ENCODE measurements at regions of chr1 and their contacts with region 1.

Region 1: GRCh38 chr1:28877132-28877781 is 37.1 kb upstream of the EPB41 start:
- DNase-seq: peak; percentile 88
- H3K4me3 Mint-ChIP-seq: no peak overlapping the region
- H3K27ac Mint-ChIP-seq: no peak overlapping the region
- H3K4me1 Mint-ChIP-seq: peaks cover 9% of the 10 kb centered on the region
- H3K27me3 Mint-ChIP-seq: no peaks in the 10 kb centered on the region

Region 2: DNA sequence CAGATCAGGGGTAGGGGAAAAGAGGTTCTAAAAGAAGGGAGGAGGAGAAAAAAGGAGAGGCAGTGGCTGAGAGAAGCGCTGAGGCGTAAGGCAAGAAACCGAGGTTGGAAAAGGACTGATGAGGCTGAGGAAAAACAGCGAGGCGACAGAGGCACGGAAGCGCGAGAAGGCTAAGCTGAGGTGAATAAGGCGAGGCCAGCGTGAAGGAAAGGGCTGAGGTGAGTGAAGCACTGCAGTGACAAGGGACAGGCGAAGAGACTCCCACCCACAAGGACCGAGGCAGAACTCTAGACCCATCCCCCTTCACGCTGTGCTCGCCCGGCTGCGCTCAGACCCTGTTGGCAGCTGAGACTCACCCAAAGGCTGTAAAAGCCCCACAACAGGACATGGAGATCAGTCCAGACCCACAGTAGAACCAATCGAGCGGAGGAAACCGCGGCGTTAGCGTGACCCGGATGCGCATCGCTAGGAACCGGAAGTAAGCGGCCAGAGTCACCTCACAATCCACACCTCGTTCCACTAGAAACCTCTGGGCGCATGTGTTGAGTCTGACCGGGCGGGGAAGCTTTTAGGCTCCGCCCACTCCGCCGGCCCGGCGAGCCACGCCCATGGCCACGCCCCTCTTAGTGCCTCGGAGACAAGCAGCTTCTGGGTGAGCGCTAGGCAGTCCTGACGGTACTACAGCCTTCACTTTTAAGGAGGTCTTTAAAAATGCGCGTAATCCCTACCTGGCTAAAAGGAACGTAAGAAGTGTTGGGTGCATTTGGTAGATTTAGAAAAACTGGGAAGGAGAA is 788.9 kb before region 1 on chr1 and contains the start of gene EYA3:
- CTCF ChIA-PET with region 1: no interaction called
- intact Hi-C with region 1: loop called (anchors 5 kb)
- DNase-seq: peak; percentile 99
- H3K4me3 Mint-ChIP-seq: peak within 1 kb of the TSS; percentile 91
- H3K27ac Mint-ChIP-seq: peak within 1 kb of the TSS; percentile 87
- H3K4me1 Mint-ChIP-seq: peaks cover 25% of the 10 kb centered on the region
- H3K27me3 Mint-ChIP-seq: peaks cover 3% of the 10 kb centered on the region
- total RNA-seq, gene EYA3: 25.4 to 25.9 TPM

Region 3: GRCh38 chr1:28412731-28413130 is 464.5 kb before region 1 on chr1:
- CTCF ChIA-PET with region 1: no interaction called
- intact Hi-C with region 1: loop called (anchors 2 kb)
- DNase-seq: no peak
- H3K4me3 Mint-ChIP-seq: no peak overlapping the region
- H3K27ac Mint-ChIP-seq: no peak overlapping the region
- H3K4me1 Mint-ChIP-seq: peaks cover 12% of the 10 kb centered on the region
- H3K27me3 Mint-ChIP-seq: no peaks in the 10 kb centered on the region

Region 4: DNA sequence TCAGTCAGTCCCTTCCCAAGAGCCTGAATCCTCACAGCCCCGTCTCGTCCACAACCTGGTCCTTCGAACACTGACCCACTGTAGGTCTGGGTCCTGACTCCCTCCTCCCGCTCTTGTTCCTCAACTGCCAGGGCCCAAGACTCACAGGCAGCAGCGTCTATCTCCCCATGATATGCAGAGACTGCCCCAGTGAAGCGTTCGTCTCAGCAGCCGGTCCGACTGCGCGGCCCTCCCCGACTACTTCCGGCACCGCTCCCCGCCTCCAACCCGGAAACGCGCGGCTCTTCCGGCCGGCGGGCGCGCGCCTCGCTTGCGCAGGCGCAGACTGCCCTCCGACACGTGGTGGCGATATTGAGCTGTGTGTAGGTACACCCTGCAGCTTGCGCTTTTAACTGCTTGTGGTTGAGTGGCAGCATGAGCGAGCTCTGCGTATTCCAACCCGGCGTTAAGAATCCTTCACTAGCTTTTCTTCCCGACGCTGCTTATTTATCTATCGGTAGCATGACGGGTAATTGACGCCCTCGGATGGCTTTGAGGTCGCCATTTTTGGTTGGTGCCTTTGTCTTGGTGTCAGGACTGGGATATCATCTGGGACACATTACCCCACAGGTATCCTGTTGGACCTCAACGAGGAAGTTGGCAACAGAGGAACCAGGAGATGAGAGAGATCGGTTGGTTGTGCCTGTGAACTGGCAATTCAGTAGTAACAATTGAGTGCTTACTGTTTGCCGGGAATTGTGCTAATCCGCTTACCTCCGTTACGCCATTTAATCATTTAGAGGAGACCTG is 234.2 kb before region 1 on chr1 and contains the start of gene TAF12:
- CTCF ChIA-PET with region 1: interaction called, 8 read pairs
- intact Hi-C with region 1: loop called (anchors 1 kb)
- DNase-seq: peak; percentile 93
- H3K4me3 Mint-ChIP-seq: peak within 1 kb of the TSS; percentile 96
- H3K27ac Mint-ChIP-seq: peak within 1 kb of the TSS; percentile 94
- H3K4me1 Mint-ChIP-seq: peaks cover 44% of the 10 kb centered on the region
- H3K27me3 Mint-ChIP-seq: no peaks in the 10 kb centered on the region
- total RNA-seq, gene TAF12: 22.5 to 23.5 TPM

Region 5: DNA sequence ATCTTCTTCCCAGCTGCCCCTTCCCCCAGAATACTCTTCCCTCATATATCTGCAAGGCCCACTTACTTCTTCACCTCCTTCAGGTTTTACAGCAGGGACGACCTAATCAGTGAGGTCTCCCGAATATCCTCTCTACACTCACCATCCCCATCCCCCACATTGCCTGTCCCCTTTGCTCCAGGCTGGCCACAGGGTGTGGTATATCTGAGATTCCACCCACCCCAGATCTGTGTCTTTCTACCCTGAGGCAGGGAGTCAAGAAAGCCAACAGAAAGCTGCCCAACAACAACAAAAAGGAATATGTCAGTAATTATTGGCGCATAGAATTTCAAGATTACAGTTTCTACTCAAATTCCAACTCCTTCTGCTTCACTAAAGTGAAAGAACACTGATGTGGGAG is 95.2 kb before region 1 on chr1:
- CTCF ChIA-PET with region 1: interaction called, 116 read pairs
- intact Hi-C with region 1: loop called (anchors 1 kb)
- DNase-seq: no peak
- H3K4me3 Mint-ChIP-seq: no peak overlapping the region
- H3K27ac Mint-ChIP-seq: no peak overlapping the region
- H3K4me1 Mint-ChIP-seq: peaks cover 3% of the 10 kb centered on the region
- H3K27me3 Mint-ChIP-seq: no peaks in the 10 kb centered on the region

Region 6: DNA sequence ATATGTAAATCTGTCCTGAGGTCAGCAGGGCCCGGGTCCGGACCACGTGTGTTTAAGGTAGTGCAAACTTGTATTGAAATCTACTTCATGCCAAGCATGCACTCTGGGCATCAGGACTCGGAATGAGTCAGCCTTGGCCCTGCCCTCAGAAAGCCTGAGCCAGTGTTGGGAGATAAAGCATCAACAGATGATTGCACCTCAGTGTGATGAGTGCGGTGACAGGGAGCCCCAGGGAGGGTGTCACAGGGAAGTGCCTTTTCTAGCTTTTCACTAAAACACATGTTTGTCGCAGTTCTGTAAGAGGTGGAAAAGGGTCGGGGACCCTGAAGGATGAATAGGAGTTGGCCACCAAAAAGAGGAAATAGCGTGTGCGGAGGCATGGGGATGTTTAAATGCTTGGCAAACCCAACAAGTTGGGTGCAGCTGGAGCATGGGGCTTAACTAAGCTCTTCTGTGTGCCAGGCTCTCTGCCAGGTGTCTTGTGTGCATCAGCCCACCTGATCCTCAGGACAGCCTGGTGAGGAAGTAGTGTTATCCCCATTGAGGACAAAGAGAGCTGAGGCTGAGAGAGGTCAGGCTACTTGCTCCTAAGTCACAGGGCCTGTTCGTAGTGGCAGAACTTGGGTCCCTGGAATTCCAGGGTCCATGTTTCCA is 11.1 kb before region 1 on chr1:
- CTCF ChIA-PET with region 1: interaction called, 18 read pairs
- intact Hi-C with region 1: no loop called
- DNase-seq: no peak
- H3K4me3 Mint-ChIP-seq: no peak overlapping the region
- H3K27ac Mint-ChIP-seq: no peak overlapping the region
- H3K4me1 Mint-ChIP-seq: no peaks in the 10 kb centered on the region
- H3K27me3 Mint-ChIP-seq: no peaks in the 10 kb centered on the region

Region 7: DNA sequence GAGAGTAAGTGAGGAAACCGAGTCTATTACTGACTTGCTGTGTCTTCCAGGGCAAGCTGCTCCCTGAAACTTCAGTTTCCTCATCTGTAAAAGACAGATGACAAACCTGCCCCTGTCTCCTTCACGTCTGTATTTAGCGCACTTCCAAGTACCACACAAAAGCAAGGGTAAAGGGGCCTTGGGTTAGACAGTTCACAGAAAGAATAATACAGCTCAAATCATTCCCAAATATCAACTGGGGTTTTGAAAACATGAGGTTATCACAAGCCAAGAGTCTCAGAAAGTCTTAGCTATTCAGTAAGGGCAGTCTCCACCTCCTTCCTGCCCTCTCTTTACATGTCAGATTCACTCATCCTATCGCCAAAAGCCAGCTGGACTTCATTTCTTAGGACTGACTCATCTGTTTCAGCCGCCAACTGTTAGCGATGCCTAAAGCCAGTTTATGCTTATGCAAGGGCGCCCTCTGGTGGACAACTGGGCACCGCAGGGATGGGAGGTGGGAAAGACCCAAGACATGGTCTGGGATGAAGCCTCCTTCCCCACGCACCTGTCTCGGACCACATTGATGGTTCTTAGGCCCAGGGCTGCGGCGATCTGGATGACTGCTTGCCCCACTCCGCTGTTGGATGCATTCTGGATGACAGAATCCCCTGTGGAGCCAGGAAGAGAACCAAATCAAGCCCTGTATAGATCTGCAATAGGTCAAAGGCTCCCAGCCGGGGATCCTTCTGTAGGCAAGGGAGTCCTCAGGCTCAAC is 325.5 kb after region 1 on chr1:
- CTCF ChIA-PET with region 1: interaction called, 71 read pairs
- intact Hi-C with region 1: loop called (anchors 1 kb)
- DNase-seq: peak; percentile 97
- H3K4me3 Mint-ChIP-seq: no peak overlapping the region
- H3K27ac Mint-ChIP-seq: no peak overlapping the region
- H3K4me1 Mint-ChIP-seq: peaks cover 6% of the 10 kb centered on the region
- H3K27me3 Mint-ChIP-seq: no peaks in the 10 kb centered on the region